ENCODE measurements at regions of chr14 and their contacts with region 1.

Region 1: DNA sequence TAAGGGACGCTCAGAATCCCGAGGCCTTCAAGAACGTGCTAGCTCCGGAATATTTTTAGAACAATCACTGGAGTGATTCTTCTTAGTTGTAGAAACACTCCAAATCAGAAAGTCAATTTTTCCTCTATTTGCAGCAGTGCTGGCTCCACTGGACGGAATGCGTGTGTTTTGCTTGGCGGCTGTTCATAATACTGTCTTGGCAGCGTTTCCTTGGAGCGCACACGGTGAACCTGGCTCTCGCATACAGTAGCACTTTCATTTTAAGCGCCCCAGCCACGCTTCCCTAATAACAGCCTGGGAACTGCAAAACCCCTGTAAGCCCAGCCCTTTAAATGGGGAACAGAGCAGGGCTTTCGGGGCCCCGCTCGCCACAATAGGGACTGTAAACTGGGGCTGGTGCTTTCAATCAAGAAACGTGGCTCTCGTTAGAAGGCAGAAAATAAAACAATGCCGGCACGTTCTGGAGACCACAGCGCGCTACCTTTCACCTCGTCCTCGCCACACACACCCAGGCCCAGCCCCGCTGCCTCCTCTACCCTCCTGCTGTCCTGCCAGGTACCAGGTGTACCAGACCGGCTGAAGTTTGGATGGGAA is 79.9 kb downstream of the BCL11B start:
- DNase-seq: peak; percentile 33
- H3K4me3 Mint-ChIP-seq: peak overlapping the region; percentile 91
- H3K27ac Mint-ChIP-seq: peak overlapping the region; percentile 96
- H3K4me1 Mint-ChIP-seq: peaks cover 76% of the 10 kb centered on the region
- H3K27me3 Mint-ChIP-seq: no peaks in the 10 kb centered on the region

Region 2: GRCh38 chr14:99207496-99207895 is 15.4 kb after region 1 on chr14:
- intact Hi-C with region 1: loop called (anchors 2 kb)
- DNase-seq: no peak
- H3K4me3 Mint-ChIP-seq: no peak overlapping the region
- H3K27ac Mint-ChIP-seq: peak overlapping the region; percentile 72
- H3K4me1 Mint-ChIP-seq: peaks cover 95% of the 10 kb centered on the region
- H3K27me3 Mint-ChIP-seq: no peaks in the 10 kb centered on the region

Region 3: GRCh38 chr14:99241325-99242010 is 49.3 kb after region 1 on chr14:
- intact Hi-C with region 1: loop called (anchors 2 kb)
- DNase-seq: no peak
- H3K4me3 Mint-ChIP-seq: peak overlapping the region; percentile 84
- H3K27ac Mint-ChIP-seq: peak overlapping the region; percentile 96
- H3K4me1 Mint-ChIP-seq: peaks cover 82% of the 10 kb centered on the region
- H3K27me3 Mint-ChIP-seq: no peaks in the 10 kb centered on the region